ENCODE measurements at regions of chr7 and their contacts with region 1.

Region 1: GRCh38 chr7:101507791-101508252 is 121.3 kb downstream of the MYL10 start:
- DNase-seq: peak; percentile 86
- H3K4me3 ChIP-seq: no peak overlapping the region; a peak in 1 of 4 replicates
- H3K27ac ChIP-seq: no peak overlapping the region
- H3K4me1 ChIP-seq: no peaks in the 10 kb centered on the region; a peak in 1 of 4 replicates
- H3K27me3 ChIP-seq: peaks cover 22% of the 10 kb centered on the region
- CTCF ChIP-seq: peak; percentile 97
- EP300 ChIP-seq: no peak
- RAD21 ChIP-seq: peak; percentile 99

Region 2: GRCh38 chr7:101357433-101357832 is 150.4 kb before region 1 on chr7:
- CTCF ChIA-PET with region 1: interaction called, 56 read pairs
- POLR2A ChIA-PET with region 1: no interaction called
- DNase-seq: no peak
- H3K4me3 ChIP-seq: no peak overlapping the region
- H3K27ac ChIP-seq: no peak overlapping the region
- H3K4me1 ChIP-seq: peaks cover 0 to 2% of the 10 kb centered on the region in 2 experiments; a peak in 1 of 4 replicates
- H3K27me3 ChIP-seq: peaks cover 17% of the 10 kb centered on the region
- CTCF ChIP-seq: no peak
- EP300 ChIP-seq: no peak
- RAD21 ChIP-seq: no peak

Region 3: GRCh38 chr7:101378751-101379184 is 129.1 kb before region 1 on chr7:
- CTCF ChIA-PET with region 1: interaction called, 11 read pairs
- POLR2A ChIA-PET with region 1: no interaction called
- DNase-seq: peak; percentile 36
- H3K4me3 ChIP-seq: no peak overlapping the region
- H3K27ac ChIP-seq: no peak overlapping the region
- H3K4me1 ChIP-seq: peaks cover 0 to 2% of the 10 kb centered on the region in 2 experiments; a peak in 1 of 4 replicates
- H3K27me3 ChIP-seq: 0 out of 2 replicates have a peak, but pooled peaks cover 5% of the 10 kb centered on the region
- CTCF ChIP-seq: no peak
- EP300 ChIP-seq: no peak
- RAD21 ChIP-seq: no peak

Region 4: DNA sequence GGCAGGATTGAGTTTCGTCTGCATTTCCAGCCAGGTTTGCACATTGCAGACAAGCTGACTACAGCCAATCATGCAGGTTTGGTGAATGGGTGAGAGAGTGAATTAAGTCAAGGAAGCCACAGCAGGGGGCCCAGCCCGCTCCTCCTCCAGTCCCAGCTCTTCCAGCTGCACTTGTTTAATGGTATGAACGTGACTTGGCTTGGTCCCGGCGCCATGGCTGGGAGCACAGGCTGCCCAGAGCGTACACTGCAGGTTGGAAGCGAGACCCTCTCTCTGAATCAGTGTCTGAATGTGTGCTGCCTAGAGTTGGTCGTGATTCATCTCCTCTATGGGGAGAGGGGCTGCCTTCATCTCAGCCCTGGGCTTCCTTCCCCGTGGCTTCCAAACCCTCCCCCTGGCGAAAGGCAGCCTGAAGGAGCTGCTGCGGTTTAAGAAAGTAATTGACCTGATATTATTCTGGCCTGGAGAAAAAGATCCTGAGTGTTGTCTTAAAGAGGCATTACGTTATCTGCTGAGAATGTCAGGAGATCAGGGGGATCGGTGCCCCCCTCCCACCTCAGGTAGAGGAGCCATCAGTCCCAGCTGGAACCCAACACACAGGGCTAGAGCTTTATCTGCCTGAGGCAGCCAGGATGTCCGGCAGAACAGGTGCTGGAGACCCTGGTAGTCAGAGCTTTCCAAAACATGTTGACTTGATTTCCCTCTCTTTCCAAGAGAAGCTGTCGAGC is 13.1 kb before region 1 on chr7:
- CTCF ChIA-PET with region 1: interaction called, 14 read pairs
- POLR2A ChIA-PET with region 1: no interaction called
- DNase-seq: no peak
- H3K4me3 ChIP-seq: no peak overlapping the region
- H3K27ac ChIP-seq: no peak overlapping the region
- H3K4me1 ChIP-seq: no peaks in the 10 kb centered on the region
- H3K27me3 ChIP-seq: no peaks in the 10 kb centered on the region; the same call in 1 of the 2 replicates
- CTCF ChIP-seq: no peak
- EP300 ChIP-seq: no peak
- RAD21 ChIP-seq: no peak

Region 5: GRCh38 chr7:101537205-101537604 is 29.4 kb after region 1 on chr7:
- CTCF ChIA-PET with region 1: interaction called, 35 read pairs
- POLR2A ChIA-PET with region 1: no interaction called
- DNase-seq: peak; percentile 83
- H3K4me3 ChIP-seq: no peak overlapping the region
- H3K27ac ChIP-seq: no peak overlapping the region; a peak in 1 of 4 replicates
- H3K4me1 ChIP-seq: peaks cover 0 to 18% of the 10 kb centered on the region in 2 experiments; a peak in 1 of 4 replicates
- H3K27me3 ChIP-seq: no peaks in the 10 kb centered on the region
- CTCF ChIP-seq: no peak
- EP300 ChIP-seq: no peak
- RAD21 ChIP-seq: no peak